Heart left ventricle (tissue), 16 donors: ENCODE measurements at regions of chr19 and their contacts with region 1.

Region 1: DNA sequence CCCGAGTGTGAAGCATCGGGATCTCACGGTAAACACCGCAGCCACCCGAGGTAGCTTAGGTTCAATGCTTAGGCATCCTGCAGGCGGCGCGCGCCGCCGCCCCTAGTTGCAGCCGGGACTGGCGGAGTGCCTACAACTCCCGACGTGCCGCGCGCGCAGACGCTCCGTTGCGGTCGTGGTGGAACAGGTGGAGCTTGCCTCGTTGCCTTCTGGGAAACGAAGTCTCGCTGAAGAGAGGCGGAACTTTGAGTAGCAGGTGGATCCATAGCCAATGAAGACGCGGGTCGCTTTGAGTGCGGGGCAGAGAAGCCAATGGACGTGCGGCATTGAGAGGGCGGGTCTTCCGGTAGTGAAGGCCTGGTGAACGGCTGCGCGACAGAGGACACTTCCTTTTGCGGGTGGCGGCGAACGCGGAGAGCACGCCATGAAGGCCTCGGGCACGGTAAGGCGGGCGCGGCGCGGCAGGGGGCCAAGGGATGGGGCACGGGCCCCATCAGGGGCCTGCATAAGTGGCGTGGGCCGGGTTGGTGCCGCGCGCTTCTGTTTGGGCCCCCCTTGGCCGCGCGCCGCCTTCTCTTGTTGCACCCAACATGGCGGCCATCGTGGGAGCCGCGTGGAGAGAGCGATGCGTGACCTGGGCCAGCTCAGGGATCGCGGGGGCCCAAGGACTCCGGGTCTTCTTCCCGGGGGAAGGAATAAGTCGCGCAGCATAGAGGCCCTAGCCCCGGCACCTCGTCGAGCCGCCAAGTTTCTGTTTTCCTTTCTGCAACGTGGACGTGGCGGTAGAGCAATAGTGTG is at the start of gene RPL18A:
- DNase-seq: peak; percentile 99
- ATAC-seq: peak; percentile 96 to 98 (median 97)
- H3K4me3 ChIP-seq: peak within 1 kb of the TSS; percentile 68 to 100 (median 88)
- H3K27ac ChIP-seq: peak within 1 kb of the TSS; percentile 41 to 96 (median 88)
- H3K4me1 ChIP-seq: peaks cover 5 to 40% (median 17%) of the 10 kb centered on the region in 12 donors
- H3K27me3 ChIP-seq: no peaks in the 10 kb centered on the region
- CTCF ChIP-seq: peak; percentile 57 to 90 (median 84)
- POLR2A ChIP-seq: peak; percentile 69 to 97
- total RNA-seq, gene RPL18A: 566 to 1,124 (median 752) TPM

Region 2: GRCh38 chr19:17346109-17346671 is 513.5 kb before region 1 on chr19:
- intact Hi-C with region 1: loop called in 1 of 10 experiments (anchors 10 kb)
- DNase-seq: peak; percentile 70 to 88 (median 75)
- ATAC-seq: peak; percentile 51 to 79 (median 72)
- H3K4me3 ChIP-seq: no peak overlapping the region
- H3K27ac ChIP-seq: peak overlapping the region in 10 of 12 donors; percentile 23 to 84 (median 68)
- H3K4me1 ChIP-seq: peaks cover 0 to 45% (median 30%) of the 10 kb centered on the region in 12 donors
- H3K27me3 ChIP-seq: no peaks in the 10 kb centered on the region
- CTCF ChIP-seq: peak; percentile 88 to 97 (median 96)
- POLR2A ChIP-seq: no peak

Region 3: GRCh38 chr19:17703824-17704463 is 155.8 kb before region 1 on chr19:
- intact Hi-C with region 1: loop called in 9 of 10 experiments (anchors 5 to 10 kb)
- DNase-seq: peak in 2 of 5 donors; percentile 52 to 56
- ATAC-seq: peak in 3 of 4 donors; percentile 75 to 82 (median 76)
- H3K4me3 ChIP-seq: no peak overlapping the region
- H3K27ac ChIP-seq: no peak overlapping the region
- H3K4me1 ChIP-seq: peaks cover 0 to 6% (median 0%) of the 10 kb centered on the region in 12 donors
- H3K27me3 ChIP-seq: peaks cover 0 to 25% (median 5%) of the 10 kb centered on the region in 9 donors
- CTCF ChIP-seq: peak; percentile 68 to 93 (median 80)
- POLR2A ChIP-seq: no peak

Region 4: DNA sequence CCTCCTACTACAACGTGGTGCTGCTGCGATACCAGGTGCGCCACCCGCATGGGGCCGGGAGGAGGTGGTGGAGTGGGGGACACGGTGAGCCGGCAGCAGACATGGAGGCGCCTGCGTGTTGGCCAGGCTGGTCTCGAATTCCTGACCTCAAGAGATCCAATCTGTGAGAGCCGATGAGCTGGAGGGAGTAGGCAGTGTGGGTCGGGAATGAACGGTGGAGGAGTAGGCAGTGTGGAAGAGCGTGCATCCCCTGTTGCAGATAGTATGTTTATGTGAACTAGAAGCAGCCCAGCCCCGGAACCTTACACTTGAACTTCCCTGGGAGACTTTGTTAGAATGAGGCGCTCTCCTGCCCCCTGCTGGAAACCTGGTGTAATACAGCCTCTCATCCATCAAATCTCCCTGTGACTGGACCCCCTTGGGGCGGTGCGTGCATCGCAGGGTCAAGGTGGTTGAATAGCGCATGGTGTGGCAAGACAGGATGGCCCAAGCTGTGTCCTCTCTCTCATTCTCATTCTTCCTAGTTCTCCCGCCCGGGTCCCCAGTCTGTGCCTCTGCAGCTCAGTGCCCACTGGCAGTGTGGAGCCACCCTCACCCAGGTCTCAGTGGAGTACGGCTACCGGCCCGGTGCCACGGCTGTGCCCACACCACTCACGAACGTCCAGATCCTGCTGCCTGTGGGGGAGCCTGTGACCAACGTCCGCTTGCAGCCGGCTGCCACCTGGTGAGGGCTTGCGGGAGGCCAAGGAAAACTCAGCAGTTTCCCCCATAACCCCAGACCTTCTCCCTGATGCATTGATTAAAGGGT is 75.3 kb before region 1 on chr19:
- intact Hi-C with region 1: loop called in 2 of 10 experiments (anchors 2 to 5 kb)
- DNase-seq: peak; percentile 39 to 73 (median 58)
- ATAC-seq: peak in 3 of 4 donors; percentile 34 to 70 (median 67)
- H3K4me3 ChIP-seq: no peak overlapping the region
- H3K27ac ChIP-seq: no peak overlapping the region
- H3K4me1 ChIP-seq: peaks cover 0 to 5% (median 0%) of the 10 kb centered on the region in 12 donors
- H3K27me3 ChIP-seq: peaks cover 0 to 32% (median 13%) of the 10 kb centered on the region in 9 donors
- CTCF ChIP-seq: peak; percentile 65 to 82 (median 76)
- POLR2A ChIP-seq: no peak

Region 5: GRCh38 chr19:17794731-17795536 is 64.8 kb before region 1 on chr19 and contains the start of gene B3GNT3:
- intact Hi-C with region 1: no loop called
- DNase-seq: peak in 1 of 5 donors; percentile 76
- ATAC-seq: no peak
- H3K4me3 ChIP-seq: peak within 1 kb of the TSS in 1 of 12 donors; percentile 25
- H3K27ac ChIP-seq: no peak within 1 kb of the TSS
- H3K4me1 ChIP-seq: peaks cover 0 to 20% (median 0%) of the 10 kb centered on the region in 12 donors
- H3K27me3 ChIP-seq: peaks cover 12 to 72% (median 35%) of the 10 kb centered on the region in 9 donors
- CTCF ChIP-seq: no peak
- POLR2A ChIP-seq: no peak
- total RNA-seq, gene B3GNT3: not detected

Region 6: GRCh38 chr19:17944301-17944700 is 84.6 kb after region 1 on chr19:
- intact Hi-C with region 1: no loop called
- DNase-seq: peak in 1 of 5 donors; percentile 54
- ATAC-seq: peak in 1 of 4 donors; percentile 15
- H3K4me3 ChIP-seq: no peak overlapping the region
- H3K27ac ChIP-seq: no peak overlapping the region
- H3K4me1 ChIP-seq: peaks cover 0 to 20% (median 12%) of the 10 kb centered on the region in 12 donors
- H3K27me3 ChIP-seq: peaks cover 0 to 14% (median 4%) of the 10 kb centered on the region in 9 donors
- CTCF ChIP-seq: no peak
- POLR2A ChIP-seq: no peak

Region 7: GRCh38 chr19:17996826-17997316 is 137.1 kb after region 1 on chr19:
- intact Hi-C with region 1: loop called in 9 of 10 experiments (anchors 5 to 10 kb)
- DNase-seq: peak; percentile 83 to 93 (median 84)
- ATAC-seq: peak; percentile 81 to 86 (median 82)
- H3K4me3 ChIP-seq: no peak overlapping the region
- H3K27ac ChIP-seq: no peak overlapping the region
- H3K4me1 ChIP-seq: peaks cover 0 to 14% (median 5%) of the 10 kb centered on the region in 12 donors
- H3K27me3 ChIP-seq: peaks cover 0 to 21% (median 0%) of the 10 kb centered on the region in 9 donors
- CTCF ChIP-seq: peak; percentile 94 to 99 (median 98)
- POLR2A ChIP-seq: no peak

Region 8: GRCh38 chr19:18021121-18021755 is 161.5 kb after region 1 on chr19:
- intact Hi-C with region 1: no loop called
- DNase-seq: peak; percentile 89 to 95 (median 92)
- ATAC-seq: peak; percentile 12 to 66 (median 50)
- H3K4me3 ChIP-seq: peak overlapping the region in 3 of 12 donors; percentile 18 to 38 (median 33)
- H3K27ac ChIP-seq: peak overlapping the region; percentile 86 to 98 (median 94)
- H3K4me1 ChIP-seq: peaks cover 32 to 84% (median 68%) of the 10 kb centered on the region in 12 donors
- H3K27me3 ChIP-seq: no peaks in the 10 kb centered on the region
- CTCF ChIP-seq: no peak
- POLR2A ChIP-seq: peak in 1 of 2 donors; percentile 16